ENCODE measurements at regions of chr2 and their contacts with region 1.

Region 1: DNA sequence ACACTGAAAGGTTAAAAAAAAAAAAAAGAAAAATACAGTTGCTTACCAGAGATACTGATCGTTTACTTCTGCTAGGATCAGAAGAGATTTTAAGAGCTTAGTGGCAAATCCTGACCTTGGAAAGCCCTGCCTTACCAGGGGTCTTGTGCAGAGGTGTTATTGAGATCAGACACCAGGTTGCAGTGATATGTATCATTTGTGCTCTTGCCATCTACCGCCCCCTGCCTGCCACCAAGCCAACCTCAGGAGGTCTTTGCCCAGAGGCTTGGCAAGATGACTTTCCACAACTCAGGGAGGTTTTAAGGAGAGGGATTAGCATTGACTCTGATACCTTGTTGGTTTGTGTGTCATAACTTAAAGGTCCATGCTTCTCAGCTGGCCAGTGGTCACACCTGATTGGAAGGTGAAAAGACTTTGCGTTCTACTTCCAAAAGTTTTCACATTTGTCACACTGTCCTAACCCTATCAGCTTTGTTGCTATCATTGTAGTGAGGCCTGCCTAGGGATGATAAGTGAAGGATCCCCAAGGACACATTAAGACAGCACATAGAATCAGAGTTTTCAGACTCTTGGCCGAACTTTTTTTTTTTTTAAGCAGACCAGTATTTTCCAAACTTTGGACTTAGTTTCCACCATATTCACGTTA is 46.2 kb upstream of the MGAT5 start:
- DNase-seq: peak; percentile 69
- ATAC-seq: peak; percentile 88
- H3K4me3 Mint-ChIP-seq: no peak overlapping the region
- H3K27ac Mint-ChIP-seq: no peak overlapping the region
- H3K4me1 Mint-ChIP-seq: peaks cover 7% of the 10 kb centered on the region
- H3K27me3 Mint-ChIP-seq: no peaks in the 10 kb centered on the region

Region 2: DNA sequence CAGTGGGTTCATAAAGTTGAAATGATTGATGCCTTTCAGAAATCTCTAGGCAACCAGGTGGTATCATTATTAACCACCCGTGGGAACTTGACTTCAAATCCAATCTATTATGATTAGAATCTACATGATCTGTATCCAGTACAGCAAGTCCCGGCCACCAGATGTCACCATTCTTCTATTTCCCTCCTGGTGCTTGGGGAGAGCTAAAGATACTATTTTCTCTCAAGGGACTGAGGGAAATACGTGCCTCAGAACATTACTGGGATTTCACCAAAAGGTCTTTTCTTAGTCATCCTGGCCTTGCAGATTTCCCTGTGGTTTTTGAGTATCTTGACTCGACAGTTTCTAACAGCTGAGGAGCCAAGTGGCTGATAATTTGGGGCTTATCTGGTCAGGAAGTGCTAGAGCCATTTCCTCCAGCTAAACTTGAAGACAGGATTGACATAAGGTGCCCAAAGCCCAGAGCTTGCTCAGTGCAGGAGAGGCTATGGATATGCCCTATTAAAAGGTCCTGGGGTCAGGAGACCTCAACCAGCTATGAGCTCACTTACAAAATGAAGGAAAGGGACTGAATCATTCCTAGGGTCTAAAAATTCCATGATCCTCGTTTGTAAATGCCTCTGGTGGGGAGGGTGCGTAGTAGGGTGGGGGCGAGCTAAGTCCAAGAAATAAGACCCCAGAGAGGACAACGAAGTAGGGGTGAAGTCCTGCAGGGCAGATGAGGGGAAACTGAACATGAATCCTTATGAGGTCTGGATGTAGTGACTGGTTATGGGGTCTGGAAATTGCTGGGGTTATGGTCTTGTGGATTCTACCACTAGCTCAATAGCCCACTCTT is 89.2 kb before region 1 on chr2:
- CTCF ChIA-PET with region 1: interaction called, 68 read pairs
- DNase-seq: peak; percentile 93
- ATAC-seq: peak; percentile 47
- H3K4me3 Mint-ChIP-seq: peak overlapping the region; percentile 87
- H3K27ac Mint-ChIP-seq: peak overlapping the region; percentile 92
- H3K4me1 Mint-ChIP-seq: peaks cover 35% of the 10 kb centered on the region
- H3K27me3 Mint-ChIP-seq: peaks cover 14% of the 10 kb centered on the region

Measured in activated CD8-positive, alpha-beta memory T cell treated with anti-CD3 and anti-CD28 coated beads, Interleukin-2, amount 10 ng/mL, durations not matched to agents 7 days and 5 days (primary cell).